ENCODE measurements at regions of chr13 and their contacts with region 1.

Region 1: DNA sequence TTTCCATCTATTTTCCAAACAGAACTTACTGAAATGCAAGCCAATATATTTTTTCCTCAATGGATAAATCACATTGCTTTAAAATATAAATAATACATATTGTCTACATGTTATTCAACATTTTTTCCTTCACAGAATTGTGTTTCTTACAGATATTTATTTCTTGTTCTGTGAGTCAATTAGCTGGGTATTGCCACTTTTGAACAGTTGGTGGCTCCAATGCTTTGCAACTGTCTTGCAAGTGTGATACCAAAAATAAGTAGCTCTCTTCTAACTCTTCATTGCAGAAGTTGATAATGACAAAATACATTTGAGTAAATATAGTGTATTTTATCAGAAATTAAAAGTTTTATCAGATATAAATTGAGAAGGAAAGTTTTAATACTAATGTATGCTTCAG is 17.1 kb upstream of the GPC5 start:
- DNase-seq: no peak
- H3K4me3 Mint-ChIP-seq: no peak overlapping the region
- H3K27ac Mint-ChIP-seq: no peak overlapping the region
- H3K4me1 Mint-ChIP-seq: peaks cover 4% of the 10 kb centered on the region
- H3K27me3 Mint-ChIP-seq: peaks cover 12% of the 10 kb centered on the region

Region 2: DNA sequence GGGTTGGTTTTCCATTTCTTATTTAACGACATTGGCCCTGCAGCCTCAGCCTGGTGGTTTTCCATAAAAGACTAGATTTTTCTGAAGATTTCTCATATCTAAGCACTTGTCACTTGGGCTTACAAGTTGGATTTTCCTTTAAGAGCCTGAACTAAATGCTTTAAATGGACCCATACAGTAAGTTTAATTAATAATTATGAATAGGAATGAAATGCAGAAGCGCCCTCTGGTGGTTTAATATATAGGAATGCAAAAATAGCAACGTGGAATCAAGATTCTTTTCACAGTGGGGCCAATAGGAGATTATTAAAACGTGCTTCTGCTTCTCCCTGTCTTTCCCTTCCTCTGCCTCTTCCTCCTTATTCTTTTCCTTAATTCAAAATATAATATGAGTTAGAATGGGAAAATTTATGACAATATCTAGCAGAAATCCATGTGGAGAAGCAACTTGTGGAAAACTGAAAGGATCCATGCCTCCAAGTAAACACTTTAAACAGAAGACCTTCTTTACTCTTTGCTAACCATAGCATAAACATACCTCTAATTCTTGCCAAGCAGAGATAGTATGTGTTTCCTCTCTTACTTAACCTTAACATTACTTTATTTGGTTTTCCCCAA is 341.0 kb after region 1 on chr13:
- CTCF ChIA-PET with region 1: interaction called, 6 read pairs
- POLR2A ChIA-PET with region 1: no interaction called
- intact Hi-C with region 1: loop called (anchors 2 kb)
- DNase-seq: no peak
- H3K4me3 Mint-ChIP-seq: no peak overlapping the region
- H3K27ac Mint-ChIP-seq: no peak overlapping the region
- H3K4me1 Mint-ChIP-seq: no peaks in the 10 kb centered on the region
- H3K27me3 Mint-ChIP-seq: no peaks in the 10 kb centered on the region

Measured in activated CD4-positive, alpha-beta memory T cell treated with anti-CD3 and anti-CD28 coated beads for 36 hours (primary cell).